ENCODE measurements at regions of chr4 and their contacts with region 1.

Region 1: DNA sequence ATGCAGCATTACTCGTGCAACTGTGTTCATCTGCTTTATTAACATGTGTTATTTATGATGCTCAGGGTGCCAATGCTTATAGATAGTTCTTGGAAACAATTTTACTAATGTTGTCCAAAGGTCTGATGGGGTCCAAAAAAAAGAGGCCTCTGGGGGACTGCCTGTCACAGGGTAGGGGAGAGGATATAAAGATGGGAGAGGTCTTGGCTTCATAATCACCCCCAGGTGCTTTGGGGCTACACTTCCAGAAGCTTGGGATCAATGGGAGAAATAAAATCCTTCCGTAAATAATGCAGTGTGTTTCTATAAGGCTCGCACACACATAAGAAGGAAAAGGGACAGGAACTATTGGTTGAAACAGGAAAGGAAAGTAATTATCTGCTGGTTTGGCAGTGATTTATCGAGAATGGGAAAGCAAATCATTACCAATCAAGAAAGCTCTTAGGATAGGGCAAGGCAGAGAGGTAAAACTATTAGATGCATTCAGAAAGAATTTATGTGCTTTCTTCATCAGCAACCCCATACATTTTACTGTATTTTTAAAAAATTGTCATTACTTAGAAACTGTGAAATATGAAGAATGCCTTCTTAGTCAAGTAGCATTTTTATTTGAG is 571.3 kb downstream of the PACRGL start:
- DNase-seq: no peak
- H3K4me3 ChIP-seq: no peak overlapping the region
- H3K27ac ChIP-seq: no peak overlapping the region
- H3K4me1 ChIP-seq: no peaks in the 10 kb centered on the region
- H3K27me3 ChIP-seq: no peaks in the 10 kb centered on the region
- CTCF ChIP-seq: no peak
- POLR2A ChIP-seq: no peak

Region 2: DNA sequence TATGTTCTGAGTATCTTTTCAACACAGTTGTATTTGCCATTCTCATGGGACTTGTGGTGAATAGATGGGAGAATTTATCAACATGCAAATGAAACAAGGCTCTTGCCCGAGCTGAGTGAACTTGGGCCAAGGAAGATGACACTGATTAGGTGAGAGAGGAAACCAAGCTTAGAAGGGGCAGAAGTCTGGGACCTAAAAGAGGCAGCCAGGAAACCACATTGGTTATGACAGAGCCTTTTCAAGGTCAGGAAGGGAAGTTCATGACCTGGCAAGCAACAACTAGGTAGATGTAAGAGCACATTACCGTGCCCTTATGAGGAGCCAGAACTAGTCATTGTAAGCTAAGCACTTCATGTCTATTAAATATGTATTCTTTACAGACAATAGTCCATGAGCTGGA is 19.0 kb after region 1 on chr4:
- intact Hi-C with region 1: loop called (anchors 2 kb)
- DNase-seq: no peak
- H3K4me3 ChIP-seq: no peak overlapping the region
- H3K27ac ChIP-seq: no peak overlapping the region
- H3K4me1 ChIP-seq: no peaks in the 10 kb centered on the region
- H3K27me3 ChIP-seq: no peaks in the 10 kb centered on the region
- CTCF ChIP-seq: no peak
- POLR2A ChIP-seq: no peak

Measured in breast epithelium (tissue), 4 donors.